H1 (cell line): ENCODE measurements at regions of chr19 and their contacts with region 1.

Region 1: GRCh38 chr19:54137086-54137921 is at the start of gene CNOT3:
- DNase-seq: peak; percentile 95 to 100
- H3K4me3 ChIP-seq: peak within 1 kb of the TSS; percentile 68 to 84 (median 84)
- H3K27ac ChIP-seq: peak within 1 kb of the TSS; percentile 90
- H3K4me1 ChIP-seq: peaks cover 0 to 26% (median 7%) of the 10 kb centered on the region in 4 experiments; a peak in 5 of 7 replicates
- H3K27me3 ChIP-seq: no peaks in the 10 kb centered on the region
- CTCF ChIP-seq: no peak; a peak in 1 of 4 replicates
- EP300 ChIP-seq: no peak
- POLR2A ChIP-seq: peak; percentile 89
- RAD21 ChIP-seq: no peak
- total RNA-seq, gene CNOT3: 82.9 and 86.4 TPM in 2 replicates

Region 2: GRCh38 chr19:54159352-54160181 is 22.3 kb after region 1 on chr19 and contains the start of gene LENG1:
- CTCF ChIA-PET with region 1: interaction called, 10 read pairs
- POLR2A ChIA-PET with region 1: interaction called, 348 read pairs
- DNase-seq: peak; percentile 93 to 100
- H3K4me3 ChIP-seq: peak within 1 kb of the TSS; percentile 81 to 96 (median 88)
- H3K27ac ChIP-seq: peak within 1 kb of the TSS; percentile 84
- H3K4me1 ChIP-seq: peaks cover 0 to 24% (median 11%) of the 10 kb centered on the region in 4 experiments; a peak in 6 of 7 replicates
- H3K27me3 ChIP-seq: peaks cover 0 to 8% (median 4%) of the 10 kb centered on the region in 4 experiments; a peak in 4 of 7 replicates
- CTCF ChIP-seq: peak in 2 of 3 experiments; percentile 25 to 31; a peak in 3 of 4 replicates
- EP300 ChIP-seq: no peak; a peak in 1 of 3 replicates
- POLR2A ChIP-seq: peak; percentile 74 to 76; a peak in 2 of 3 replicates
- RAD21 ChIP-seq: no peak
- total RNA-seq, gene LENG1: 4.4 and 4.6 TPM in 2 replicates

Region 3: DNA sequence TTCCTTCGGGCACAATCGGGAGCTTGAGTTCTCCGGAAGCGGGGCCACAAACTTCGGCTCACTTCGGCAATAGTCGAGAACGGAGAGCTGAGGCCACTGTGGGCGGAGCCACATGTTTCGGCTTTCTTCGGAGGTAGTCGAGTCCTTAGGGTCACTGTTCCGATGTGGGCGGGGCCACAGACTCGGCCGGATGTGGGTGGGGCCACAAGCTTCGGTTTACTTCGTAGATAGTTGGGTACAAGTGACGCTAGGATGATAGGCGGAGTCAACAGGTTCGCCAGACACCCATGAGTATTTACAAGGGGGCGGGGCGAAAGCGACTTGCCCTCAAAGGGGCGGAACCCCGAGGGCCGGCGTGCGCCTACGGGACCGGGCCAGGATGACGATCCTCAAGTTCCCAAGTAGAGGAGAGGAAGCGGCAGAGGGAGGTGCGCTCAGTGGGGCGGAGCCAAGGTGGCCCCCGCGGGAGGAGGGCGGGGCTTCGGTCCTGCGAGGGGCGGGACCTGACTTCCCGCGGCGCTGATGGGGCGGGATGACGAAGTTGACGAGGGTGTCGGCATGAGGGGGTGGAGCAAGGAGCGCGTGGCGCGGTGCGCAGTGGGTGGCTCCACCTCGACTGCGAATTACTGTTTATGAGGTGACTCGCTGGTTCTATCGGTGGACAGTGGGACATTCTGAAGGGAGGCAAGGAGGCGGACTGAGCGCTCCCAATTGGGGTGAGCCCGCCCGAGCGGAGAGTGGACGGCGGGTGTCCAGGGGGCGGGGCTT is 52.6 kb after region 1 on chr19:
- CTCF ChIA-PET with region 1: no interaction called
- POLR2A ChIA-PET with region 1: interaction called, 22 read pairs
- DNase-seq: peak; percentile 100
- H3K4me3 ChIP-seq: peak overlapping the region; percentile 67 to 96 (median 83)
- H3K27ac ChIP-seq: peak overlapping the region; percentile 99
- H3K4me1 ChIP-seq: peaks cover 3 to 12% (median 7%) of the 10 kb centered on the region in 4 experiments; a peak in 5 of 7 replicates
- H3K27me3 ChIP-seq: no peaks in the 10 kb centered on the region
- CTCF ChIP-seq: no peak
- EP300 ChIP-seq: no peak
- POLR2A ChIP-seq: peak; percentile 73 to 79; a peak in 2 of 3 replicates
- RAD21 ChIP-seq: no peak